CD4-positive, alpha-beta memory T cell (primary cell): ENCODE measurements at regions of chr7 and their contacts with region 1.

Region 1: DNA sequence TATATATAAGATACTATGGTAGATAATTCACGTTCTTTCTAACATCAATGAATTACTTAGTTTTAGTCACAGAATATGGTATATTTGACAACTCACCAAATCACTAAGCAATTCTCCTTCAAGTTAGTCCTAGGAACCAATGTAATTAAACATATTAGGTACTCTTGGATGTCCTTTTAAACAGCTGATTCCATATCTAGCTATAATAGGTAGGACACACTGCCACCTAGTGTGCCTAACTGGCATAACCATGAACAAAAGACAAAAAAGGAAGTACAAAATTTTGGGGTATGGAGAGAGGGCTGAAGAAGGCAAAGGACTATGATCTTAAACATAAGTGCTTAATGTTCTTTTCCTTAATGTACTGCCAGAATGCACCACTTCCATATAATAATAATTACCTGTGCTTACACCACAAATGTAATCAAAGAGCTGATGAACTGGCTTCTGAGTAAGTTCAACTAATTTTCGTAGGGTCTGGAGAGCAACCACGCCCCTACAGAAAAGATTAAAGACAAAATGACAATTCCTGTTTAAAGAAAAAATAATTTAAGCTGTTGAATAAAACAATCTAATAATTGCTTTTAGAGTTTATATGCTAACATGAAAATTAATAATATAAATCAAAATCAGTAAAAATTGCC is 28.7 kb downstream of the PNPLA8 start:
- DNase-seq: peak; percentile 31 to 46 (median 33)
- H3K4me3 ChIP-seq: no peak overlapping the region
- H3K4me3 Mint-ChIP-seq: no peak overlapping the region
- H3K27ac ChIP-seq: no peak overlapping the region
- H3K27ac Mint-ChIP-seq: no peak overlapping the region
- H3K4me1 ChIP-seq: no peaks in the 10 kb centered on the region
- H3K4me1 Mint-ChIP-seq: peaks cover 0 to 2% (median under 1%) of the 10 kb centered on the region in 4 donors
- H3K27me3 ChIP-seq: no peaks in the 10 kb centered on the region
- H3K27me3 Mint-ChIP-seq: no peaks in the 10 kb centered on the region

Region 2: DNA sequence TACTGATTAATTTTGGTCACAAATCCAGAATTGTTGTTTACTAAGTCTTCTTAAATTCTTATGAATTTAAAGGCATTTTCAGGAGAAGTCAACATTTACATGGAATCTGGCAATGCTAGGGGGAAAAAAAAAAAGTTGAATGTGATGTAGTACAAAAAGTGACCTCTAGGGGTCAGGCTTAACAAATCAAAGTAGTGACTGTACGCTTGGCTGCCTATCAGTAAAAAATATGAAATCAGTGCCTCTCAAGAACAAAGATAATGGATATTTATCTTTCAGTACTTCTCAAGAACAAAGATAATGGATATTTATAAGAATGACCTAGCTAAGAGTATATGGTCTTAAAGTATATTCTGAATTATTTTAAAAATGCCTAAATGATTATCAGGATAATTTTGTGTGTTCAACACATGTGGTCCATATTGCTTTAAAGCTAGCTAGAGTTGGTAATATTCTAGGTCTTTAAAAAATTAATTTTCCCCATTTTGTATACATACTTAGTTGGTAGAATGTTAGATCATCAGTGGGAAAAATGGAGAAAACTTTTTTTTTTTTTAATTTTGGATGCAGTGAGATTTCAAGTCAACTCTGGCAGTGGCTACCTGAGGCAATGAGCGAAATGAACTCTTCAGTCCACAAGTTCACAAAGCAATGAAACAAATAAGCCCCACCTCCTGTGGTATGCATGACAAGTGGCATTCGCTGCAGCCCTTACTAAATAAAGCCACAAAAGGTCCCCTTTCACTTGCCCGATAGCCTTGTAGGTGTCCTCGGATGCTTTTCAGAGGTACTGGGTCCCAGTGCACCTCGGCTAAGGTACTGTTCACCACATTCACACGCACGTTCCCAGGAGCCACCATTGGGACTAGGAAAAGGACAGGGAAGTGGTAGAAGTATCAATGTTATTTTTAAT is 315.9 kb before region 1 on chr7:
- CTCF ChIA-PET with region 1: interaction called, 13 read pairs
- POLR2A ChIA-PET with region 1: no interaction called
- intact Hi-C with region 1: no loop called
- DNase-seq: peak in 4 of 5 donors; percentile 26 to 39 (median 32)
- H3K4me3 ChIP-seq: no peak overlapping the region
- H3K4me3 Mint-ChIP-seq: no peak overlapping the region
- H3K27ac ChIP-seq: no peak overlapping the region
- H3K27ac Mint-ChIP-seq: no peak overlapping the region
- H3K4me1 ChIP-seq: no peaks in the 10 kb centered on the region
- H3K4me1 Mint-ChIP-seq: no peaks in the 10 kb centered on the region
- H3K27me3 ChIP-seq: no peaks in the 10 kb centered on the region
- H3K27me3 Mint-ChIP-seq: peaks cover under 1 to 8% of the 10 kb centered on the region in 2 donors

Region 3: GRCh38 chr7:108452722-108453121 is 44.5 kb before region 1 on chr7:
- CTCF ChIA-PET with region 1: interaction called, 9 read pairs
- POLR2A ChIA-PET with region 1: no interaction called
- intact Hi-C with region 1: loop called (anchors 1 kb)
- DNase-seq: peak in 1 of 5 donors; percentile 12
- H3K4me3 ChIP-seq: no peak overlapping the region
- H3K4me3 Mint-ChIP-seq: no peak overlapping the region
- H3K27ac ChIP-seq: no peak overlapping the region
- H3K27ac Mint-ChIP-seq: no peak overlapping the region
- H3K4me1 ChIP-seq: no peaks in the 10 kb centered on the region
- H3K4me1 Mint-ChIP-seq: peaks cover 0 to 17% (median 7%) of the 10 kb centered on the region in 4 donors
- H3K27me3 ChIP-seq: peaks cover 15% of the 10 kb centered on the region
- H3K27me3 Mint-ChIP-seq: peaks cover 28 to 45% of the 10 kb centered on the region in 2 donors

Region 4: GRCh38 chr7:108486291-108486966 is 10.8 kb before region 1 on chr7:
- CTCF ChIA-PET with region 1: interaction called, 32 read pairs
- POLR2A ChIA-PET with region 1: no interaction called
- intact Hi-C with region 1: no loop called
- DNase-seq: no peak
- H3K4me3 ChIP-seq: no peak overlapping the region
- H3K4me3 Mint-ChIP-seq: no peak overlapping the region
- H3K27ac ChIP-seq: no peak overlapping the region
- H3K27ac Mint-ChIP-seq: no peak overlapping the region
- H3K4me1 ChIP-seq: no peaks in the 10 kb centered on the region
- H3K4me1 Mint-ChIP-seq: no peaks in the 10 kb centered on the region
- H3K27me3 ChIP-seq: no peaks in the 10 kb centered on the region
- H3K27me3 Mint-ChIP-seq: no peaks in the 10 kb centered on the region

Region 5: DNA sequence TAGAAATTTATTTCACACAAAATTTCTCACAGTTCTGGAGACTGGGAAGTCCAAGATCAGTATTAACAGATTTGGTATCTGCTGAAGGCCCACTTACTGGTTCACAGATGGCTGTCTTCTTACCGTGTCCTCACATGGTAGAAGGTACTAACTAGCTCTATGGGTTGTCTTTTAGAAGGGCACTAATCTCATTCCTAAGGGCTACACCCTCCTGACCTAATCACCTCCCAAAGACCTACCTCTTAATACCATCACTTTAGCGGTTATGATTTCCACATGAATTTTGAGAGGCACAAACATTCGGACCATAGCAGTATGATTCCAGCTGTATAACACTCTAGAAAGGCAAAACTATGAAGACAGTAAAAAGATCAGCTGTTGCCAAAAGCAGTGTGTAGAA is 20.7 kb after region 1 on chr7:
- CTCF ChIA-PET with region 1: interaction called, 24 read pairs
- POLR2A ChIA-PET with region 1: interaction called, 4 read pairs
- intact Hi-C with region 1: no loop called
- DNase-seq: no peak
- H3K4me3 ChIP-seq: no peak overlapping the region
- H3K4me3 Mint-ChIP-seq: no peak overlapping the region
- H3K27ac ChIP-seq: no peak overlapping the region
- H3K27ac Mint-ChIP-seq: no peak overlapping the region
- H3K4me1 ChIP-seq: peaks cover 7% of the 10 kb centered on the region
- H3K4me1 Mint-ChIP-seq: peaks cover 31 to 54% (median 42%) of the 10 kb centered on the region in 4 donors
- H3K27me3 ChIP-seq: no peaks in the 10 kb centered on the region
- H3K27me3 Mint-ChIP-seq: no peaks in the 10 kb centered on the region

Region 6: GRCh38 chr7:108525985-108526767 is 29.0 kb after region 1 on chr7 and contains the start of gene PNPLA8:
- CTCF ChIA-PET with region 1: interaction called, 24 read pairs
- POLR2A ChIA-PET with region 1: interaction called, 4 read pairs
- intact Hi-C with region 1: no loop called
- DNase-seq: peak; percentile 100
- H3K4me3 ChIP-seq: peak within 1 kb of the TSS; percentile 52 to 81
- H3K4me3 Mint-ChIP-seq: peak within 1 kb of the TSS; percentile 90 to 98 (median 96)
- H3K27ac ChIP-seq: peak within 1 kb of the TSS; percentile 98
- H3K27ac Mint-ChIP-seq: peak within 1 kb of the TSS; percentile 99 to 100 (median 100)
- H3K4me1 ChIP-seq: peaks cover 38% of the 10 kb centered on the region
- H3K4me1 Mint-ChIP-seq: peaks cover 30 to 58% (median 39%) of the 10 kb centered on the region in 4 donors
- H3K27me3 ChIP-seq: no peaks in the 10 kb centered on the region
- H3K27me3 Mint-ChIP-seq: no peaks in the 10 kb centered on the region
- total RNA-seq, gene PNPLA8: 28.0 to 28.9 TPM